Transverse colon (tissue), 4 donors: ENCODE measurements at regions of chr9 and their contacts with region 1.

Region 1: GRCh38 chr9:134325817-134326723 is at the start of gene RXRA:
- DNase-seq: peak; percentile 91
- H3K4me3 ChIP-seq: peak within 1 kb of the TSS; percentile 73 to 86 (median 84)
- H3K27ac ChIP-seq: peak within 1 kb of the TSS; percentile 93 to 99 (median 98)
- H3K4me1 ChIP-seq: peaks cover 33 to 70% (median 59%) of the 10 kb centered on the region in 4 donors
- H3K27me3 ChIP-seq: no peaks in the 10 kb centered on the region
- CTCF ChIP-seq: peak in 3 of 5 experiments; percentile 5 to 35 (median 13)
- EP300 ChIP-seq: no peak
- POLR2A ChIP-seq: peak; percentile 47
- total RNA-seq, gene RXRA: 27.3 to 70.5 (median 58.6) TPM

Region 2: DNA sequence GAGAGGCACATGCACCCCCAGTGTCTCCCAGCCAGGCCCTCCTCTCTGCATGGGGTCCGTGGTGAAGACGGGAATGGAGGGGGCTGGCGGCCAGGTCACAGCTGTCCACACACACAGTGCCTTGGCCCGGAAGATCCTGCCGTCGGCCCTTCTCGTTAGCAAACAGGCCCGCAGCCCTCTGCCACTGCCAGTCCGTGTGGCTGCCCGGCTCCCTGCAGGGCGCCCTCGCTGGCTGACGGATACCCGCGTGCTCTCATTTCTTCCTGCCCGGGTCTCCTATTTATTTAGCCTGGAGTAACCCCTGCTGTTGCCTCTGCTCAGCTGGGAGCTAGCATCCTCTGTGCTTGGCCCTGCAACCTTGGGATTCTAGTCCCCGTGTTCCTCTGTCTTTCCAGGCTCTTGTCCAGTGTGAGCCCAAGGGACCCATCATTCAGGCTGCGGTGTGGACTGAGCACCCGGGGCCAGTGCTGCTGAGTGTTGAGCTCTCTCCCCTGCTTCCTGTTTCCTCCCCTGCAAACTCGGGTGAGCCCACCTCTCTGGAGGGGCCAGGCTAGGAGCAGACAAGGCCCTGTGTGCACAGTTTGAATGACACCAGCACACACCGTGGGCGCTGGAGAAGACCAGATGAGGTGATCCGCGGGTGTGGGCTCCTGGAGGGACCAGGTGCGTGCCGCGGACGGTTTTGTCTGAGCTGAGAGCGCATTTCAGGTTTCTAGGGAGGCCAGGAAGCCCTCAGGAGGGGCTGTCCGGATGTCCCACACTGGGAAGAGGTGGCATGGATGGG is 147.1 kb before region 1 on chr9:
- in situ Hi-C with region 1: loop called in 2 of 4 experiments (anchors 25 kb)
- intact Hi-C with region 1: loop called (anchors 10 kb)
- DNase-seq: peak; percentile 7
- H3K4me3 ChIP-seq: no peak overlapping the region
- H3K27ac ChIP-seq: peak overlapping the region in 1 of 4 donors; percentile 10
- H3K4me1 ChIP-seq: peaks cover 0 to 20% (median 5%) of the 10 kb centered on the region in 4 donors
- H3K27me3 ChIP-seq: peaks cover 35% of the 10 kb centered on the region
- CTCF ChIP-seq: no peak
- EP300 ChIP-seq: no peak
- POLR2A ChIP-seq: no peak

Region 3: DNA sequence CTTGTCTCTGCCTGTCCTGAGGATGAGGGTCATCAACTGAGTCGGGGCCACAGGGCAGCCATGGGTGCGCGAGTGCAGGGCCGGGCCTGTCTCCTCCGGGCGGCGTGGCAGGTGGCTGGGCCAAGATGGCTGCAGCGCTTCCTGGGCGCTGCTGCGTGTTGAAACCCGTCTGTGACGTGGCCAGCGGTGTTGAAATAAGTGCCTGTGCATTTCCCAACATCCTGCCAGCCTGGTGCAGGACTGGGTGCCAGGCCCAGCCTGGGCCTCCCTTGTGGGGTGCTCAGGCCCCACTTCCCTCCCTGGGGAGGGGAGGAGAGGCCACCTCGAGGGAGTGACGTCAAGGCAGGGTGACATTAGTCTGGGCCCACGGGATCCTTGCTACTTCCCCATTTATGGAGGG is 45.7 kb after region 1 on chr9:
- in situ Hi-C with region 1: no loop called
- intact Hi-C with region 1: loop called (anchors 1 kb)
- DNase-seq: peak; percentile 53
- H3K4me3 ChIP-seq: no peak overlapping the region
- H3K27ac ChIP-seq: peak overlapping the region; percentile 27 to 53 (median 36)
- H3K4me1 ChIP-seq: peaks cover 42 to 64% (median 53%) of the 10 kb centered on the region in 4 donors
- H3K27me3 ChIP-seq: no peaks in the 10 kb centered on the region
- CTCF ChIP-seq: no peak
- EP300 ChIP-seq: no peak
- POLR2A ChIP-seq: no peak

Region 4: DNA sequence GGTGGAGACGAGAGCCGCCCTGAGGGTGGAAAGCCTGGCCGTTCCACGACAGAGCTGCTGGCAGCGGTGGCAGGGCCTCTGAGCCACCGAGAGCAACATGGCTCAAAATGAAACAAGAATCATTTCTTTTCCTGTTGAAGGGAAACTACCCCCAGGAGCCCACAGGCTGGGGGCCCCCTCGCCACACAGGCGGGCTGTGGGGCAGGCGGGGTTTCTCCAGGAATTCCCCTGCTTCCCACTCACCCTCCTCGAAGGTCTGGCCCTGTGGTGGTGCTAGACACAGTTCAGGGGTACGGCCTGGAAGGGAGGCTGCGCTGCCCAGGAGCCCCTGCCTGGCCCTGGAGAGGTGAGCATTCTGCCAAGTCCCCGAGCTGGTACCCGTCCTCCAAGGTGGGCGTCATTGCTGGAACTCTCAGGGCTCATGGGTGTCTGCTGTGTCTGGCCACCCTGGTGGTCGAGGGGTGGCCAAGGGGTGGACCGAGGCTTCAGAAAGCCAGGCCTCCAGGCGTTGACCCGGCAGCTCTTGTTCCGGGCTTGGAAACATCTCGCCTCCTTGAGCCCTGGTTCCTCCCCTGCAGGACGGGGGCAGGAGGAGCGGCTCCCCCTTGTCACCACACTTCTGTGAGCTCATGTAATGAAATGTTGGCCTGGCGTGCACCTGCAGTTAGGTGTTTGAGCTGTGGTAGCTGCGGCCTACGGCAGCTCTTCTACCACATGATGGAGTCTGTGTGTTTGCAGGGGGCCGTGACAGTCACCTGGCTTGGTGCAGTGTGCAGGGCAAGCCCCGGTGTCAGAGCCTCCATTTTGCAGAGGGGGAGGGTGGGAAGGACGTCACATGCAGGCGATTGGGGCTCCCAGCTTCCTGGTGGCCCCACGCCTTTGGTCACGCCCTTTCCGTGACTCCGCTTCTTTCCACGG is 65.5 kb after region 1 on chr9:
- in situ Hi-C with region 1: no loop called
- intact Hi-C with region 1: no loop called
- DNase-seq: peak; percentile 54
- H3K4me3 ChIP-seq: no peak overlapping the region
- H3K27ac ChIP-seq: peak overlapping the region; percentile 23 to 38 (median 29)
- H3K4me1 ChIP-seq: peaks cover 29 to 83% (median 46%) of the 10 kb centered on the region in 4 donors
- H3K27me3 ChIP-seq: no peaks in the 10 kb centered on the region
- CTCF ChIP-seq: no peak
- EP300 ChIP-seq: no peak
- POLR2A ChIP-seq: no peak

Region 5: GRCh38 chr9:134434894-134435506 is 108.9 kb after region 1 on chr9:
- in situ Hi-C with region 1: no loop called
- intact Hi-C with region 1: loop called (anchors 10 kb)
- DNase-seq: peak; percentile 91
- H3K4me3 ChIP-seq: no peak overlapping the region
- H3K27ac ChIP-seq: peak overlapping the region; percentile 80 to 89 (median 84)
- H3K4me1 ChIP-seq: peaks cover 33 to 69% (median 40%) of the 10 kb centered on the region in 4 donors
- H3K27me3 ChIP-seq: no peaks in the 10 kb centered on the region
- CTCF ChIP-seq: no peak
- EP300 ChIP-seq: peak; percentile 72
- POLR2A ChIP-seq: no peak

Region 6: GRCh38 chr9:134707031-134707680 is 381.1 kb after region 1 on chr9:
- in situ Hi-C with region 1: no loop called
- intact Hi-C with region 1: no loop called
- DNase-seq: peak; percentile 73
- H3K4me3 ChIP-seq: no peak overlapping the region
- H3K27ac ChIP-seq: peak overlapping the region; percentile 87 to 95 (median 89)
- H3K4me1 ChIP-seq: peaks cover 43 to 68% (median 53%) of the 10 kb centered on the region in 4 donors
- H3K27me3 ChIP-seq: no peaks in the 10 kb centered on the region
- CTCF ChIP-seq: no peak
- EP300 ChIP-seq: no peak
- POLR2A ChIP-seq: no peak